ENCODE measurements at regions of chr13 and their contacts with region 1.

Region 1: DNA sequence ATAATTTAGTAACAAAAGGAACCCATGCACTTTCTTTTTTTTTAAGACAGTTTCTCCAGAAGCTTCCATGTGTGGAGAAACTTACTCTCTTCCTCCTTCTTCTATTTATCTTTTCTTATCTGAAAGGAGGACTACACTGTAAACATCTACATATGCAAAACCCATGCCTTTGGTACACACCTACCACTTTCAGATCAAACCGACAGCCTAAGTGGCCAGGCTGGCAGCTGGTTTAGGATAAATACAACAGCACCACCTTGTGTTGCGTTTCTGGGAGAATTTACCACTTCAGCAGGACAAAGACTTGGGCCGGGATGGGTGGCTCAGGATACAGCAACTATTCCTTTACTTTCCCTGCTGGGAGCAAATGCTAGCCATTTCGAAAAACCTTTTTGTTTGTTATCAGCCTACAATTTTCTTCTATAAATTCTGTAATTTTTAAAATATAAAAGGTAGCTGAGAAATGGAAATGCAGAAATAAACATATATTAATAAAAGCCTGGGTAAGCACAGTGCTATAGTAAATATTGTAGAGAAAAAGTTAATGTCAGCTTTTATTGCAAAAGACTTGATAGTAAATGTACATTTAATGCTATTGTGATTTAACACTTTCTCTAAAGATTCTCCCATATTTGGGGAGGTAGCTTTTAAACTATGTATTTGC is 94.0 kb upstream of the RFC3 start:
- DNase-seq: peak; percentile 86
- ATAC-seq: peak; percentile 83
- H3K4me3 ChIP-seq: no peak overlapping the region
- H3K27ac ChIP-seq: peak overlapping the region; percentile 78
- H3K4me1 ChIP-seq: peaks cover 40% of the 10 kb centered on the region
- H3K27me3 ChIP-seq: no peaks in the 10 kb centered on the region
- CTCF ChIP-seq: peak; percentile 65 to 85 (median 74); a peak in 5 of 6 replicates
- EP300 ChIP-seq: 0 out of 4 replicates have a peak, but pooled peaks of 1 of the 2 experiments have one; percentile 34
- POLR2A ChIP-seq: no peak
- RAD21 ChIP-seq: peak; percentile 97

Region 2: DNA sequence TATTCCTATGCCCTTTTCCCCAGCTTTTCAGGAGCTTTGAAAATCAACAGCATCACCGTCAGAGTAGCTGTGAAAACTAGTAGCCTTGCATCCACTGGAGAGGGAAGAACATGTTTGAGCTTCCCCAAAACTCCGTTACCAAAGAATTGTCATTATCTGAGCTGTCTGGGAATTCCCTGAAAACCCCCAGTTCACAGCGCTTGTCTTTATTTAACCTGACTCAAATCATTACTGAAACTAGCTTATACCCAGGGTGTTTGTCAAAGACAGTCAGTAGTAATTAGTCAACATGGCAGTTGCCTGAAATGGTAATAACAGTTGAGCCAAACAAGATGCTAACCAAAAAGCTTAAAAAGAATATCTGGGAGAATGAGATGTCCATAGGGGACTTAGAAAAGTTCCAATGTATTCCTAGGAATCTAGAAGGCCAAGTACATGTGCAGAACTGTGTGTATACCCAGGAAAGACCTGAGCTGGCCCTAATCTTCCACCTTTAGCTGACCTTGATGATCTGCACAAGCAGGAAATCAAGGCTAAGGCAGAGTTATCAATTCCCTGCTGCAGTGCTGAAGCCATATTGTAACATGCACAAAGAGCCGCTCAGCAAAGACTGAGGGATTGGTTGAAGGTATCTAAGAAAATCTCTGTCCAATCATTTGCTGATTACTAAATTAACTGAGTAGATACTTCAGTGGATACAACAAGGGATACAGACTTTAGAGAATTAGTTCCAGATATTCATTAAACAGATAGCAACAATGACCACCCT is 576.9 kb before region 1 on chr13:
- CTCF ChIA-PET with region 1: no interaction called
- POLR2A ChIA-PET with region 1: no interaction called
- RAD21 ChIA-PET with region 1: interaction called, 3 read pairs
- SMC1A ChIA-PET with region 1: interaction called, 6 read pairs
- in situ Hi-C with region 1: no loop called
- intact Hi-C with region 1: loop called (anchors 5 kb)
- DNase-seq: peak; percentile 98
- ATAC-seq: peak; percentile 63
- H3K4me3 ChIP-seq: no peak overlapping the region
- H3K27ac ChIP-seq: peak overlapping the region; percentile 98
- H3K4me1 ChIP-seq: peaks cover 59% of the 10 kb centered on the region
- H3K27me3 ChIP-seq: no peaks in the 10 kb centered on the region
- CTCF ChIP-seq: no peak
- EP300 ChIP-seq: peak; percentile 99
- POLR2A ChIP-seq: no peak
- RAD21 ChIP-seq: peak; percentile 37; the same call in 1 of the 2 replicates

Region 3: DNA sequence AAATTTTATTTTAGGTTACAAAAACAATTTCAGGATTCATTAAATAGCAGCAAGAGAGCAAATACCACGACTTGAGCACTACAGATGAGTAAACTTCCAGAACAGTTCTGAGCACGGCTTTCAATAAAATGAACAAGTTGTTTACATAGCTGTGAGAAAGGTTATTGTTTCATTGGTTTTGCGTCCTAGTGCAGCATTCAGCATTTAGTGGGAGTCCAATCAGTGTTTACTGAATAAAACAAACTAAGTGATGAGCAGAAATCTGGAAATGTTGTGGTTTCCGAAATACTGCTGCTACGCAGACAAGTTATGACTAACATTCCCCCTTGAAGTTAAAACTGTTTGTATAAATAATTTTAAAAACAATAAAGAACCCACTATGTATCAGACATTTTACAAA is 186.9 kb before region 1 on chr13:
- CTCF ChIA-PET with region 1: interaction called, 6 read pairs
- POLR2A ChIA-PET with region 1: no interaction called
- RAD21 ChIA-PET with region 1: interaction called, 6 read pairs
- SMC1A ChIA-PET with region 1: interaction called, 28 read pairs
- in situ Hi-C with region 1: no loop called
- intact Hi-C with region 1: no loop called
- DNase-seq: no peak
- ATAC-seq: peak; percentile 38
- H3K4me3 ChIP-seq: no peak overlapping the region
- H3K27ac ChIP-seq: peak overlapping the region; percentile 72
- H3K4me1 ChIP-seq: peaks cover 6% of the 10 kb centered on the region
- H3K27me3 ChIP-seq: no peaks in the 10 kb centered on the region
- CTCF ChIP-seq: no peak
- EP300 ChIP-seq: no peak
- POLR2A ChIP-seq: no peak
- RAD21 ChIP-seq: no peak

Region 4: GRCh38 chr13:33678906-33679657 is 44.8 kb before region 1 on chr13:
- CTCF ChIA-PET with region 1: interaction called, 93 read pairs
- POLR2A ChIA-PET with region 1: interaction called, 16 read pairs
- RAD21 ChIA-PET with region 1: interaction called, 82 read pairs
- SMC1A ChIA-PET with region 1: interaction called, 110 read pairs
- in situ Hi-C with region 1: loop called (anchors 5 kb)
- intact Hi-C with region 1: loop called (anchors 1 kb)
- DNase-seq: peak; percentile 98
- ATAC-seq: peak; percentile 97
- H3K4me3 ChIP-seq: peak overlapping the region; percentile 77
- H3K27ac ChIP-seq: peak overlapping the region; percentile 95
- H3K4me1 ChIP-seq: peaks cover 5% of the 10 kb centered on the region; the same call in 1 of the 2 replicates
- H3K27me3 ChIP-seq: no peaks in the 10 kb centered on the region
- CTCF ChIP-seq: no peak
- EP300 ChIP-seq: peak; percentile 75 to 82; a peak in 2 of 4 replicates
- POLR2A ChIP-seq: peak; percentile 90
- RAD21 ChIP-seq: 0 out of 2 replicates have a peak, but pooled peaks have one; percentile 0

Region 5: DNA sequence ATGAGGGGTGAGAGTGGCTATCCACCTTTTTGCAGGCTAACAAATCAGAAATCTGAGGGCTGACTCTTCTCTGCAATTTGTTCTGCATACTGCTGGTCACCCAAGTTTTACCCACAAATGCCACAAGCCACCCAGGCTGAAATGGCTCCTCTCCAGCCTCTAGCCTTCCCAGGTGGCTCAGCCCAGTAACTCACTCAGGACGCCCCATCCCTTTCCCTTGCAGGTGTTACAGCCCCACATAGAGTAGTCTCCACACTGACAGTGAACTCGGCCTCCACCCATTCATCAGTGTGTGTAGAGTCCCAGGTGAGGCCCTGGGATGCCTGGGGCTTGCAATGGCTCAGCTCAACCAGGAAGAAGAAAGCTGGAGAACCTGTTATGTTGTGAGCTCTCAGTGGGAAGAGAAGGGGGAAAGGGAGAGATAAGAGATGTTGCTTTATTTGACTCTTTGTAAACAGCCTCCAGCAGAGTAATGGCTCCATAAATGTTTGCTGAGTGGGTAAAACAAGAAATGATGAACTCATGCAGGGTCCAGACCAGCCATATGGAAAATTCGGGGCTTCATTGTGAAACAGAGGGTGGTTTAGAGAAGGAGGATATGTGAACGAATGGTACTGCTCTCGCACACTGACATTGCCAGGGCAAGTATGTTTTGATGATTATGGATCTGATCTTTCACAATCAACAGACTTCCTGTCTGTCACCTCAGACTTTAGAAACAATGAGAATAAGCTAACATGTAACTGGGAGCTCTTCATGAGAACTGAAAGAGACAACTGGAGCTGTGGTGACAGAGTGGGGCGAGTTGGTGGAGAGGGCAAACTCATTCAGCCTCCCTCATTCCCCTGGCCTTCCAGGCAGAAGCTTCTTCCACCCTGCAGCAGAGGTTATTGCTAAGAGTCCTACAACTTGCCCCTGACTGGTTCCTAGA is 19.8 kb after region 1 on chr13:
- CTCF ChIA-PET with region 1: interaction called, 15 read pairs
- POLR2A ChIA-PET with region 1: interaction called, 18 read pairs
- RAD21 ChIA-PET with region 1: interaction called, 41 read pairs
- SMC1A ChIA-PET with region 1: interaction called, 69 read pairs
- in situ Hi-C with region 1: no loop called
- intact Hi-C with region 1: loop called (anchors 1 kb)
- DNase-seq: peak; percentile 80
- ATAC-seq: peak; percentile 77
- H3K4me3 ChIP-seq: peak overlapping the region; percentile 21; the same call in 1 of the 2 replicates
- H3K27ac ChIP-seq: peak overlapping the region; percentile 86
- H3K4me1 ChIP-seq: peaks cover 35% of the 10 kb centered on the region
- H3K27me3 ChIP-seq: no peaks in the 10 kb centered on the region
- CTCF ChIP-seq: no peak
- EP300 ChIP-seq: peak in 1 of 2 experiments; percentile 15; a peak in 1 of 4 replicates
- POLR2A ChIP-seq: no peak
- RAD21 ChIP-seq: no peak

Region 6: DNA sequence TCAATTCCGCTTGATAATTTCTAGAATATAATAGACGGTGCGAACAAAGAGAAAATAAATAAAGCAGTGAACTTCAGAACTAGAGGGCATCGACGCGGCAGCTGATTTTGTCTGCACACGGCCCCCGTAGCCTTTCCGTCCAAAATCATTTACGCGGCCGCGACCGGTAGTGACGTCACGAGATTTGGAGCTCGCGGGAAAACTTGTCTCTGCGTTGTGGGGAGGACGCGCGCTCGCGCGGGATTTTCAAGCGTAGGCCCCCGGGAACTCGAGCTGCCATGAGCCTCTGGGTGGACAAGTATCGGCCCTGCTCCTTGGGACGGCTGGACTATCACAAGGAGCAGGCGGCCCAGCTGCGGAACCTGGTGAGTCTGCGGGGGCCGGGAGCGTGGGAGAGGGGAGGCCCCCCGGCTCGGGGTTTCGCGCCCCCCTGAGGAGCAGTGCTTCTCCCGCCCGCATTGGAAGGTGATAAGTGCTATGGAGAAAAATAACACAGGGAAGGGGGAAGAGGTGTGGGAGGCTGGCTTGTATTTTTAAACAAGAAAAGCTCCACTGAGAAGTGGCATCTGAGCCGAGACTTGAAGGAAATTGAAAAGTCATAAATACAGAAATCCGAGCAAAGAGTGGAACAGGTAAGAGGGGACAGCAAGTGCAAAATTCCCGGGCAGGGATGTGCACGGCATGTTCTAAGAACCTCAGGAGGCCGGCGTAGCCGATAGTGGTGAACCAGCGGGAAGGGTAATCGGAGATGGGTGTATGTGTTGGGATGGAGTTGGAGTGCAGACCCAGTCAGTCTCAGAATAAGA is 94.2 kb after region 1 on chr13 and contains the start of gene RFC3:
- CTCF ChIA-PET with region 1: no interaction called
- POLR2A ChIA-PET with region 1: interaction called, 7 read pairs
- RAD21 ChIA-PET with region 1: interaction called, 8 read pairs
- SMC1A ChIA-PET with region 1: interaction called, 19 read pairs
- in situ Hi-C with region 1: no loop called
- intact Hi-C with region 1: loop called (anchors 5 kb)
- DNase-seq: peak; percentile 69
- ATAC-seq: peak; percentile 95
- H3K4me3 ChIP-seq: peak within 1 kb of the TSS; percentile 96
- H3K27ac ChIP-seq: peak within 1 kb of the TSS; percentile 77
- H3K4me1 ChIP-seq: no peaks in the 10 kb centered on the region
- H3K27me3 ChIP-seq: no peaks in the 10 kb centered on the region
- CTCF ChIP-seq: no peak
- EP300 ChIP-seq: 0 out of 4 replicates have a peak, but pooled peaks of 1 of the 2 experiments have one; percentile 64
- POLR2A ChIP-seq: peak; percentile 89
- RAD21 ChIP-seq: 0 out of 2 replicates have a peak, but pooled peaks have one; percentile 3
- polyA plus RNA-seq, gene RFC3: 88.9 to 95.9 TPM